Naive thymus-derived CD4-positive, alpha-beta T cell (primary cell): ENCODE measurements at regions of chr16 and their contacts with region 1.

Region 1: GRCh38 chr16:69424053-69424934 is at the start of gene CYB5B:
- DNase-seq: peak; percentile 72 to 98 (median 96)
- ATAC-seq: peak; percentile 98
- H3K4me3 ChIP-seq: peak within 1 kb of the TSS; percentile 84
- H3K4me3 Mint-ChIP-seq: peak within 1 kb of the TSS; percentile 92 to 99 (median 97)
- H3K27ac ChIP-seq: peak within 1 kb of the TSS; percentile 83
- H3K27ac Mint-ChIP-seq: peak within 1 kb of the TSS; percentile 89 to 98 (median 93)
- H3K4me1 ChIP-seq: peaks cover 0 to 13% of the 10 kb centered on the region in 2 donors
- H3K4me1 Mint-ChIP-seq: peaks cover 12 to 49% (median 37%) of the 10 kb centered on the region in 7 donors
- H3K27me3 ChIP-seq: no peaks in the 10 kb centered on the region
- H3K27me3 Mint-ChIP-seq: no peaks in the 10 kb centered on the region
- total RNA-seq, gene CYB5B: 29.6 to 148 (median 48.2) TPM

Region 2: GRCh38 chr16:69057400-69058378 is 366.6 kb before region 1 on chr16:
- CTCF ChIA-PET with region 1: no interaction called
- POLR2A ChIA-PET with region 1: no interaction called
- intact Hi-C with region 1: no loop called
- DNase-seq: no peak
- ATAC-seq: no peak
- H3K4me3 ChIP-seq: no peak overlapping the region
- H3K4me3 Mint-ChIP-seq: no peak overlapping the region
- H3K27ac ChIP-seq: no peak overlapping the region
- H3K27ac Mint-ChIP-seq: peak overlapping the region in 3 of 9 donors; percentile 7 to 48 (median 40)
- H3K4me1 ChIP-seq: no peaks in the 10 kb centered on the region
- H3K4me1 Mint-ChIP-seq: peaks cover 0 to 7% (median 0%) of the 10 kb centered on the region in 7 donors
- H3K27me3 ChIP-seq: no peaks in the 10 kb centered on the region
- H3K27me3 Mint-ChIP-seq: no peaks in the 10 kb centered on the region

Region 3: DNA sequence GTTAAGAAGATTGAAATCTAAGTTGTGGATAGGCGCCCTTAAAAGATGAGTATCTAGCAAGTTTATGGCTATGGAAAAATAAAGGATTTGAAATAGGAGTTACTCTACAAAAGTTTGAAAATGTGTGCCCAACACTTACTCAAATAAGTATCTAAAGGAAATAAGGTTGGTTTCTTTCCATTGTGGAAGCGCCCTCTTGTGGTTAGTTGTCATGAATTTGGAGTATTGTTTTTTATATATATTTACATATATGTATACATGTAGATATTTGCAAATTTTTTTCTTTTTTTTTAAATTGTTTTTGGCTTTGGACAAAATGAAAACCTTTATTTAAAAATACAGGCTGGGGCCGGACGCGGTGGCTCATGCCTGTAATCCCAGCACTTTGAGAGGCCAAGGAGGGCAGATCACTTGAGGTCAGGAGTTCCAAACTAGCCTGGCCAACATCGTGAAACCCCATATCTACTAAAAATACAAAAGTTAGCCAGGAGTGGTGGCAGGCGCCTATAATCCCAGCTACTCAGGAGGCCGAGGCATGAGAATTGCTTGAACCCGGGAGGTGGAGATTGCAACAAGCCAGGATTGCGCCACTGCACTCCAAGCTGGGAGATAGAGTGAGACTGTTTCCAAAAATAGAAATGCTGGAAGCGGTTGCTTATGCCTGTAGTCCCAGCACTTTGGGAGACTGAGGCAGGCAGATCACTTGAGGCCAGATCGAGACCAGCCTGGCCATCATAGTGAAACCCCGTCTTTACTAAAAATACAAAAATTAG is 137.2 kb before region 1 on chr16:
- CTCF ChIA-PET with region 1: no interaction called
- POLR2A ChIA-PET with region 1: no interaction called
- intact Hi-C with region 1: no loop called
- DNase-seq: peak in 7 of 9 donors; percentile 38 to 73 (median 65)
- ATAC-seq: peak; percentile 63
- H3K4me3 ChIP-seq: no peak overlapping the region
- H3K4me3 Mint-ChIP-seq: no peak overlapping the region
- H3K27ac ChIP-seq: no peak overlapping the region
- H3K27ac Mint-ChIP-seq: no peak overlapping the region
- H3K4me1 ChIP-seq: no peaks in the 10 kb centered on the region
- H3K4me1 Mint-ChIP-seq: peaks cover 0 to 2% (median 0%) of the 10 kb centered on the region in 7 donors
- H3K27me3 ChIP-seq: no peaks in the 10 kb centered on the region
- H3K27me3 Mint-ChIP-seq: no peaks in the 10 kb centered on the region

Region 4: DNA sequence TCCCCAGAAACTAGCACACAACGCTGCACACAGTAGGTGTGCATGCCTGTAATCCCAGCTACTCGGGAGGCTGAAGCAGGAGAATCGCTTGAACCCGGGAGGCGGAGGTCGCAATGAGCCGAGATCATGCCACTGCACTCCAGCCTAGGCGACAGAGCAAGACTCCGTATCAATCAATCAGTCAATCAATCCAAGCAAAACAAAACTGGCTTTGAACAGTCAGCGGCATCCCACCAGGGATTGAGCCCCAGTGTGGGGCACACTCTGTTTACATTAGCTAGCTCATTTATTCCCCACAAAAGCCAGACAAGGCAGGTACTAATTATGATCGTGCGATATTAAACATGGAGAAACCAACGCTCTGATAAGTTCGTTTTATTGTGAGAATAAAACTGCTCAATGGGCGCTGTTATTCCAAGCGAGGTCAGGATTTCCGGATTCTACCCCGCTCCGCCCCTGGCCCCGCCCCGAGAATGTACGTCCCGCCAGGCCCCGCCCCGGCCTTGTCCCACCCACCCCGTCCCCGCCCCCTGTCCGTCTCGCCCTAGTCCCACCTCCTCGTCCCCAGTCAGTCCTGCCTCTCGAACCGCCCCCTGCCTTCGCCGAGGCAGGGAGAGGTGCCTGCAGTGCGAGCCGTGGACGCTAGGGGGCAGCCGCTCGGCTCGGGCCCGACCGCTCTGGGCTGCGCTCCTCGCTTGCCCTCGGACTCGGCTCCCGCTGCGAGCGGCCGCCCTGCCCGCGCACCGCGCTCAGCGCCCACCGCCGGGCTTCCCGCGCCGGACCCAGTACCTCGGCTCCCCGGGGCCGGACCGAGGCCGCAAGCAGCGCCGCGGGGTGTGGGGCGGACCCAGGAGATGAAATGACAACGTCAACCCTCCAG is 113.4 kb before region 1 on chr16 and contains the start of gene VPS4A:
- CTCF ChIA-PET with region 1: no interaction called
- POLR2A ChIA-PET with region 1: no interaction called
- intact Hi-C with region 1: loop called (anchors 1 kb)
- DNase-seq: peak; percentile 95 to 99 (median 97)
- ATAC-seq: peak; percentile 99
- H3K4me3 ChIP-seq: peak within 1 kb of the TSS; percentile 74
- H3K4me3 Mint-ChIP-seq: peak within 1 kb of the TSS; percentile 90 to 100 (median 99)
- H3K27ac ChIP-seq: peak within 1 kb of the TSS; percentile 94
- H3K27ac Mint-ChIP-seq: peak within 1 kb of the TSS; percentile 92 to 99 (median 95)
- H3K4me1 ChIP-seq: peaks cover 8 to 10% of the 10 kb centered on the region in 2 donors
- H3K4me1 Mint-ChIP-seq: peaks cover 17 to 36% (median 29%) of the 10 kb centered on the region in 7 donors
- H3K27me3 ChIP-seq: no peaks in the 10 kb centered on the region
- H3K27me3 Mint-ChIP-seq: no peaks in the 10 kb centered on the region
- total RNA-seq, gene VPS4A: 36.7 to 53.7 (median 46.9) TPM

Region 5: GRCh38 chr16:69339289-69340108 is 84.8 kb before region 1 on chr16 and contains the starts of genes COG8 and NIP7:
- CTCF ChIA-PET with region 1: no interaction called
- POLR2A ChIA-PET with region 1: no interaction called
- intact Hi-C with region 1: loop called (anchors 1 kb)
- DNase-seq: peak; percentile 78 to 91 (median 90)
- ATAC-seq: peak; percentile 95
- H3K4me3 ChIP-seq: peak within 1 kb of the TSS; percentile 80
- H3K4me3 Mint-ChIP-seq: peak within 1 kb of the TSS; percentile 97 to 100 (median 99)
- H3K27ac ChIP-seq: peak within 1 kb of the TSS; percentile 86
- H3K27ac Mint-ChIP-seq: peak within 1 kb of the TSS; percentile 95 to 99 (median 98)
- H3K4me1 ChIP-seq: peaks cover 20 to 25% of the 10 kb centered on the region in 2 donors
- H3K4me1 Mint-ChIP-seq: peaks cover 31 to 70% (median 49%) of the 10 kb centered on the region in 7 donors
- H3K27me3 ChIP-seq: no peaks in the 10 kb centered on the region
- H3K27me3 Mint-ChIP-seq: no peaks in the 10 kb centered on the region
- total RNA-seq, gene COG8: 29.5 to 73.7 (median 37.4) TPM
- total RNA-seq, gene NIP7: 22.1 to 40.9 (median 30.3) TPM

Region 6: GRCh38 chr16:69351309-69352027 is 72.8 kb before region 1 on chr16 and contains the start of gene TMED6:
- CTCF ChIA-PET with region 1: no interaction called
- POLR2A ChIA-PET with region 1: no interaction called
- intact Hi-C with region 1: no loop called
- DNase-seq: no peak
- ATAC-seq: no peak
- H3K4me3 ChIP-seq: no peak within 1 kb of the TSS
- H3K4me3 Mint-ChIP-seq: no peak within 1 kb of the TSS
- H3K27ac ChIP-seq: no peak within 1 kb of the TSS
- H3K27ac Mint-ChIP-seq: peak within 1 kb of the TSS in 2 of 9 donors; percentile 48 to 62
- H3K4me1 ChIP-seq: no peaks in the 10 kb centered on the region
- H3K4me1 Mint-ChIP-seq: peaks cover 0 to 3% (median 0%) of the 10 kb centered on the region in 7 donors
- H3K27me3 ChIP-seq: no peaks in the 10 kb centered on the region
- H3K27me3 Mint-ChIP-seq: no peaks in the 10 kb centered on the region
- total RNA-seq, gene TMED6: 1.8 to 6.3 (median 2.9) TPM

Region 7: DNA sequence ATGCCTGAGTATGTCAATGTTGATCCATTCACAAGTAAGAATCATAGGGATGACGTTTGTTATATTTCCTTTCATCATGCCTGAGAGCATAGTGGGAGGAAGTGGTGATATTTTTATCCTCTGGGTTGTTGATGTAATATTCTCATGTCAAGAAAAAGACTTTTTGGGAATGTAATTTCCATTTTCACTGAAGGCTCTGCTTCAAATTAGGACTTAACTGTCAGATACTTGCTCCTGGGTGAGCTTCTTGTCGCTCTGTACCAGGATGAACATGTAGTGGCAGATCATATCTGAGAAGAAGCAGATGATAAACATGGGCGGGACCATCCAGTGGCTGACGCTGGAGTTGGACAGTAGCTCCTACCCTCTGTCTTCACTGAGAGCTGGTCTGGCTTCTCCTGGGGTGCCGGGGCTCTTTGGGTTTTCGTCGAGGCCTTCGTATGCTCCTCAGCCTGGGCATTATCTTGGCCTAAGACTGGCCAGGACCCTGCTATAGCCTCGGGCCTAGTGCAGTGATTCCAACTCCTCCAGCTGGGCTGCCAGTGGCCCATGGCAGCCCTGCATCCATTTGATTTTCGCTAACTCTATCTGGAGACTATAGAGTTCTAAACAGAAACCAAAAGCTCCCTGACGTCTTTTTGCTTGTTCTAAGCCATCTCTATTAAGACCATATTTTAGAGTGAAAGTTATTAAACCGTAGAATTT is 19.8 kb after region 1 on chr16:
- CTCF ChIA-PET with region 1: no interaction called
- POLR2A ChIA-PET with region 1: interaction called, 18 read pairs
- intact Hi-C with region 1: loop called (anchors 1 kb)
- DNase-seq: peak in 7 of 9 donors; percentile 1 to 51 (median 35)
- ATAC-seq: peak; percentile 85
- H3K4me3 ChIP-seq: peak overlapping the region; percentile 45
- H3K4me3 Mint-ChIP-seq: peak overlapping the region; percentile 68 to 90 (median 86)
- H3K27ac ChIP-seq: peak overlapping the region; percentile 64
- H3K27ac Mint-ChIP-seq: peak overlapping the region; percentile 86 to 98 (median 96)
- H3K4me1 ChIP-seq: peaks cover 10 to 26% of the 10 kb centered on the region in 2 donors
- H3K4me1 Mint-ChIP-seq: peaks cover 16 to 51% (median 41%) of the 10 kb centered on the region in 7 donors
- H3K27me3 ChIP-seq: no peaks in the 10 kb centered on the region
- H3K27me3 Mint-ChIP-seq: no peaks in the 10 kb centered on the region

Region 8: GRCh38 chr16:69726296-69727060 is 302.2 kb after region 1 on chr16 and contains the start of gene NQO1:
- CTCF ChIA-PET with region 1: no interaction called
- POLR2A ChIA-PET with region 1: no interaction called
- intact Hi-C with region 1: loop called in 1 of 2 experiments (anchors 1 kb)
- DNase-seq: peak; percentile 62 to 90 (median 78)
- ATAC-seq: peak; percentile 98
- H3K4me3 ChIP-seq: peak within 1 kb of the TSS; percentile 79
- H3K4me3 Mint-ChIP-seq: peak within 1 kb of the TSS; percentile 86 to 96 (median 95)
- H3K27ac ChIP-seq: peak within 1 kb of the TSS; percentile 57
- H3K27ac Mint-ChIP-seq: peak within 1 kb of the TSS; percentile 72 to 95 (median 86)
- H3K4me1 ChIP-seq: peaks cover 10 to 18% of the 10 kb centered on the region in 2 donors
- H3K4me1 Mint-ChIP-seq: peaks cover 15 to 57% (median 27%) of the 10 kb centered on the region in 7 donors
- H3K27me3 ChIP-seq: no peaks in the 10 kb centered on the region
- H3K27me3 Mint-ChIP-seq: no peaks in the 10 kb centered on the region
- total RNA-seq, gene NQO1: 1.7 to 27.3 (median 3.2) TPM

Region 9: GRCh38 chr16:69761983-69762813 is 337.9 kb after region 1 on chr16 and contains the start of gene WWP2:
- CTCF ChIA-PET with region 1: no interaction called
- POLR2A ChIA-PET with region 1: no interaction called
- intact Hi-C with region 1: loop called (anchors 1 to 10 kb)
- DNase-seq: peak; percentile 68 to 81 (median 77)
- ATAC-seq: peak; percentile 86
- H3K4me3 ChIP-seq: peak within 1 kb of the TSS; percentile 88
- H3K4me3 Mint-ChIP-seq: peak within 1 kb of the TSS; percentile 77 to 96 (median 94)
- H3K27ac ChIP-seq: peak within 1 kb of the TSS; percentile 92
- H3K27ac Mint-ChIP-seq: peak within 1 kb of the TSS; percentile 93 to 99 (median 98)
- H3K4me1 ChIP-seq: peaks cover 10 to 14% of the 10 kb centered on the region in 2 donors
- H3K4me1 Mint-ChIP-seq: peaks cover 16 to 47% (median 37%) of the 10 kb centered on the region in 7 donors
- H3K27me3 ChIP-seq: no peaks in the 10 kb centered on the region
- H3K27me3 Mint-ChIP-seq: peaks cover 0 to 5% (median 0%) of the 10 kb centered on the region in 5 donors
- total RNA-seq, gene WWP2: 58.4 to 81.3 (median 72.1) TPM